GM18951 (cell line): ENCODE measurements at regions of chr11 and their contacts with region 1.

Region 1: DNA sequence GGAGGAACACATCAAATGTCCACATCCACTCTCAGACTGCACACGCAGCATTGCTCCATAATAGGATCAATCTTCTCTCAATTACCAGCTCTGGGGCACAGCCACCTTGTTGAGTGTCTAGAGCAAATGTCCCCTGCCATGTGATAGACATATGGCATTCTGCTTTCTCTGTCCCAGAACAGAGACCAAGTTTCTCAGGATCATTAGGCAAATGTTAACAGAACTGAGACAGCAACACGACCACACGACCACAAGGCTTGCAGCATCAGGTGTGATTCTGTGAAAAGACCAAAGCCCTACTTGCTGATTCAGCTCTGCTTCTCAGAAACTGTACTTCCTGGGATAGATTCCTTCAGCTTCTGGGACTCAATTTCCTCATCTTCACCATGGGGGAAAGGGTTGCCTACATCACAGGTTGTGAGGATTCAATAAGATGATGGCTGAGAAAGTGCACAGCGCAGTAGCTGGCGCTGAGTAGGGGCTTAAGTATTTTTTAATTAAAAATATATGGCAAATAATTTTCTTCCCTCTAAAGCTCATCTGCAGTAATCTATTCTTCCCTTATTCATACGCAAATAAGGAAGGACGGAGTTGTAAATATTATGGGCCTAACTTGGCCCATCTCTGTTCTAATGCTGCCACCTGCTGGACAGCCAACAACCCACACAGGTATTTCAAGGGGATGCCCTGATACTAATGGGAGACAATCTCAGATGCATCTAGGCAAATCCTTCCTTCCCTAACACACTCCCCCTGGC is 54.3 kb upstream of the USP47 start:
- POLR2A ChIP-seq: no peak

Region 2: DNA sequence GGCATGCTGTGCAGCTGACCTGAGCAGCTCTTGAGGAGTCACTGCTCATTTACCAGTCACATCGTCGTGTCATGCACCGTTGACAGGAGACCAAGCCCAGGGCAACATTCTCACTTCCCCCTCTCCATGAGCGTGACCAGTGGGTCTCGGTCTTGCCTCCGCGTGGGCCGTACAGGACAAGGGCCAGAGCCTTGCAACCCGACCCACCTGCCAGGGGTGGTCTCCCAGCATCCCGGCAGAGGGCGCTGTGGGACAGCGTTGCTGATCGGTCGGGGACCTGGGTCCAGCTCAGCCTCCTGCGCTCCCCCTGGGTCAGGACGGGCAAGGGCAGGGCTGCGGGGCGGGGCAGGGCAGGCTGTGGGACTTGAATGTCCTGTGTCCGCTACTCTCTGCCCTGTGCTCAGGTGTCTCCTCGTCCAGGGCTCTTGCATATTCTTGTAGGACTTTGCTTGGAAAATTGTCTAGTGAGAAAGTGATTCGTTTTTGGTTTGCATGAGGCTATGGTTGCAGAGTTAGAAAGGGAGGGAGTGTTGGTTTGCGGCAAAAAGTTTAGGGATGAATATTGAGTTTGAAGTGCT is 995.0 kb before region 1 on chr11:
- in situ Hi-C with region 1: loop called (anchors 25 kb)
- POLR2A ChIP-seq: no peak

Region 3: GRCh38 chr11:11028017-11028692 is 759.3 kb before region 1 on chr11:
- in situ Hi-C with region 1: loop called (anchors 5 kb)
- POLR2A ChIP-seq: no peak